ENCODE measurements at regions of chr17 and their contacts with region 1.

Region 1: DNA sequence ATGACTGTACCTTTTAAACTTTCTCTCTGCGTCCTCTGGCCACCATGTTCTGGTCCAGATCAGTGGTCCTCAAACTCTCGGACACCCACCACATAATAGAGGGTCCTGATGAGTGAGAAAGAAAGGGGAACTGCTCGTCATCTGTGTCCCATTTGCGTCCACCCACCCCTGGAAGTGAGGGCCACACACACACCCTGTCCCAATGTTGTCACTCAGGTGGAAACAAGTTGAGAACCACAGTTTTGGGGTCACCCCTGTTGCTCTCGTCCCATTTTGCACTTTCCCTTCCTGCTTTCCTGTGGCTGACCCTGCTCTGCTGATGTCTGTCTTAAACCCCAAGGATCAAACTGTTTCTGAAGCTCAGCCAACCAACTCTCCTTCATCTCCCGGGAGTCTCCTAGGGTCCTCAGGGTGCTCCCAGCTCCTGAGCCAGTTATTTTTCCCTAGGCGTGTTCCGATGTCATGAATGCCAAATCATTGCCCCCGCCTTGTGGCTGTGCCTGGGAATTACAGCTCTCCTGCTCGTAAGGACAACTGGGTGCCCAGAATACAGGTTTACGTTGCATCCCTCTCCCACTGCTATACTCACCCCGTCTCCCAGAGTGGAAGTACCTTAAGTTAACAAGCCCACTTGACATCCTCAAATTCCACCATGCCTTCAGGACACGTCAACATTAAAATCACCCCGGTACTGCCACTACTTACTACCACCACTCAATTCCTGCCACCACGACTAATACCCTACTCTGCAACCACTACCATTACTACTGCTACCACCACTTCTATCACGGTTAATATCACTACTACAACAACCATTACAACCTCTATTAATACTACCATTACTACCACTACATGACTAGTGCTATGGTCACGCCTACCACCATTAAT is 26.0 kb upstream of the HNF1B start:
- H3K4me3 ChIP-seq: no peak overlapping the region
- H3K27ac ChIP-seq: no peak overlapping the region
- H3K4me1 ChIP-seq: no peaks in the 10 kb centered on the region
- CTCF ChIP-seq: peak; percentile 61

Region 2: GRCh38 chr17:37650419-37651003 is 120.4 kb before region 1 on chr17:
- CTCF ChIA-PET with region 1: interaction called, 31 read pairs
- POLR2A ChIA-PET with region 1: no interaction called
- H3K4me3 ChIP-seq: no peak overlapping the region
- H3K27ac ChIP-seq: no peak overlapping the region
- H3K4me1 ChIP-seq: no peaks in the 10 kb centered on the region
- CTCF ChIP-seq: no peak

Region 3: DNA sequence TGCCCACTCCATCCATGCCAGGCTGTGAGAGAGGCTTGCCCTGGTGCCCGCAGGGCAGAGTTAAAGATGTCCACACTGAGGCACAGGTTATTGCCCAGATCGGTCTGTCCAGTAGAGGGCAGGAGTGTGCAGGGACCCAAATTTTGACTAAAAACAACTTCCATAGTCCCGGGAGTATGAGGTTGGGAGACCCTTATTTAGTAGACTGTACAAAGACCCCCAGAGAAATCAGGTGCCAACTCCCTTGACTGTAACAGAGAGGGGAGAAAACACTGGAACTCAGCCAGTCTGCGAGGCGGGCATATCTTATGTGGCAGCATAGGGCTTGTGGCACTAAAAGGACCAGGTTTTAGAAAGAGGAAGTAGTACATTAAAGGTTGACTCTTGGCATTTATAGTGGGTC is 69.4 kb before region 1 on chr17:
- CTCF ChIA-PET with region 1: interaction called, 37 read pairs
- POLR2A ChIA-PET with region 1: no interaction called
- H3K4me3 ChIP-seq: no peak overlapping the region
- H3K27ac ChIP-seq: no peak overlapping the region
- H3K4me1 ChIP-seq: no peaks in the 10 kb centered on the region
- CTCF ChIP-seq: 0 out of 2 replicates have a peak, but pooled peaks have one; percentile 30

Region 4: DNA sequence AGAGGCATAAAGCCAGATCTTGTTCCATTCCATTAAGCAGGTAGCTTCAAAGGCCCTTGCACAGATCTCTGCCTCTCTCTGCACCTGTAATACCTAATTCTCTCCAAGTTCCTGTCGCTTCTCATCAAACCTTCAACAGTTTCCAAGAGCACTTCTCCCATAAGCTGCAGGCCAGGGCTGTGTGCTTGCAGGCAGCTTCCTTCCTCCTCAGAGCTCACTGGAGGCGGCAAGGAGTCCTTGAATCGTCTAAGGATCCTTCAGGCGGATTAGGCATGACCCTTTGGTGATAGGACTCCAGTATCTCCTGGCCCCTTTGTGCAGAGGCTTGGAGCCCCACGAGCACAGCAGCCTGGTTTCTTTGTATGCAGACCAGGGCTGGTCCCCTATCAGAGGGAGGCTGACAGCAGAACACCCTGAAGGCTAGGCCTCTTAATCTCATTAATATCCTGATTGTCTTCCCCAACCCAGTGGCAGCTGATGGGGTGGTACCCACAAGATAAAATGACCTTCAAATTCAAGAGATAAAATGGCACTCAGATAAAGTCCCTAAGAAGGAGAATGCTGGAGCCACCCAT is 45.8 kb before region 1 on chr17:
- CTCF ChIA-PET with region 1: interaction called, 11 read pairs
- POLR2A ChIA-PET with region 1: no interaction called
- H3K4me3 ChIP-seq: no peak overlapping the region
- H3K27ac ChIP-seq: peak overlapping the region; percentile 42
- H3K4me1 ChIP-seq: peaks cover 7% of the 10 kb centered on the region
- CTCF ChIP-seq: no peak

Region 5: DNA sequence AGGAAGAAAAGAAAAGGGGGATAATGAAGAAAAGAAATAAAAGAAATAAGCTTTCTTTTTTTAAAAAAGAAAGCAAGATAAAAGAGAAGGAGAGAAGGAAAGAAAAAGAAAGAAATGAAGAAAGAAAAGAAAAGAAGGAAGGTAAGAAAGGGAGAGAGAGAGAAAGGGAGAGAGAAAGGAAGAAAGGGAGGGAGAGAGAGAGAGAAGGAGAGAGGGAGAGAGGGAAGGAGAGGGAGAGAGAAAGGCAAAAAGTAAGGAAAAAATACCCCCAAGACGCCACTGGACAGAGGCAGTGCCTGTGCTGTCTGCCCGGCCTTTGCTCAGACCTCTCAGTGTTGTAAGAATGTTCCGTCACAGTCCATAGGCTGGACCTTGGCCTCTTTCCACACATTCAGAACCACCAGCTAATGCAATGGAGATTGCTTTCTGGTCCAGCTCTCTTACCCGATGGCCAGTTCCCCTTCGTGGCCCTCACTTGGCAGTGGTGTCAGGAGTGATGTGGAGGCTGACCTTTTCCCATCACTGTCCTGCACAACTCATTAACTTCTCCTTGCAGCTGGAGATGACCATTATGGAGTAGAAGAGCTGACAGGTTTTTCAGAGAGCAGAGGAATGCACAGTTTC is 11.7 kb before region 1 on chr17:
- CTCF ChIA-PET with region 1: interaction called, 19 read pairs
- POLR2A ChIA-PET with region 1: no interaction called
- H3K4me3 ChIP-seq: no peak overlapping the region
- H3K27ac ChIP-seq: no peak overlapping the region
- H3K4me1 ChIP-seq: no peaks in the 10 kb centered on the region
- CTCF ChIP-seq: no peak

Region 6: DNA sequence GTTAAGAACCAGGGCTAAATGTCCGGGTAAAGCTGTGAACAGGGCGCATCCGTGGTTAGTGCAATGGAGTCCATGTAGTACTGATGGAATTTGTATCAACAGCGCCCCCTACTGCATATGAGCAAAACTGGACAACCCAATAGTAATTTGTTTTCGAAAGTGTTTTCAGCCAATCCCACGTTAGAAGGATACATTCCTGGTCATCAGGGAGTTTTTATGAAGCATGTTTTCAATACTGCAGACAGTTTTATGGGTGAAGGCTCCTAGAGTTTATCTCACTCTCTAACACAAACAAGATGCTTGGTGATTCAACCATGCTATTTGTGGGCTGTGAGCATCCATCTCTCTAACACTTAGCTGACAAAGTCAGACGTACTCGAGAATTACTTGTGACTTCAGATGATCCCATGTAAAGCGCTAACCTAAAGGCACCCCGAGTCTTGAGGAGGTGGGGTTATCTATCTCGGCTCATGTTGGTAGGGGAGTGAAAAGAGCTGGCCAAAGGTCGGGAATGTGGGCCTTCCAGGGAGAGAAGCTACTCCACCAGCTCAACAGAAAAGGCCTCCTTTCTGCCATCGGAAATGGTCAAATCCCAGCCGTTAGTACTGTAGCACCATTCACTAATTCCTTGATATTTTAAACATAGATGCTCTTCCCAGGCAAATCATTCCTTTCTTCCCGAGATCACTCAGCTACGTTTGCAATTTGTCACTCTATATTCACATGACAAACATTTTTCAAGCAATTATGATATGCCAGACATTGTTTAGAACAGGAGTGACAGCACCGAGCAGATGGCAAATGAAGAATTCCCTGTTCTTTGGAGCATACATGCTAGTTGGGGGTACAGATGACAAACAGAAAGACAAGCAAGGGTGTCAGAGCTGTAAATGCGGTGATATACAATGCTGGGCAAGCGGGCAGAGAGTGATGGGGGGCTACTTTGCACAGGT is 20.8 kb after region 1 on chr17:
- CTCF ChIA-PET with region 1: interaction called, 12 read pairs
- POLR2A ChIA-PET with region 1: no interaction called
- H3K4me3 ChIP-seq: no peak overlapping the region
- H3K27ac ChIP-seq: no peak overlapping the region
- H3K4me1 ChIP-seq: no peaks in the 10 kb centered on the region
- CTCF ChIP-seq: 0 out of 2 replicates have a peak, but pooled peaks have one; percentile 37

Region 7: GRCh38 chr17:37818689-37819088 is 47.8 kb after region 1 on chr17:
- CTCF ChIA-PET with region 1: interaction called, 36 read pairs
- POLR2A ChIA-PET with region 1: no interaction called
- H3K4me3 ChIP-seq: no peak overlapping the region
- H3K27ac ChIP-seq: no peak overlapping the region
- H3K4me1 ChIP-seq: no peaks in the 10 kb centered on the region
- CTCF ChIP-seq: no peak

Measured in HEK293 (cell line).